Dorsolateral prefrontal cortex (tissue), 120 donors: ENCODE measurements at regions of chr4 and their contacts with region 1.

Region 1: DNA sequence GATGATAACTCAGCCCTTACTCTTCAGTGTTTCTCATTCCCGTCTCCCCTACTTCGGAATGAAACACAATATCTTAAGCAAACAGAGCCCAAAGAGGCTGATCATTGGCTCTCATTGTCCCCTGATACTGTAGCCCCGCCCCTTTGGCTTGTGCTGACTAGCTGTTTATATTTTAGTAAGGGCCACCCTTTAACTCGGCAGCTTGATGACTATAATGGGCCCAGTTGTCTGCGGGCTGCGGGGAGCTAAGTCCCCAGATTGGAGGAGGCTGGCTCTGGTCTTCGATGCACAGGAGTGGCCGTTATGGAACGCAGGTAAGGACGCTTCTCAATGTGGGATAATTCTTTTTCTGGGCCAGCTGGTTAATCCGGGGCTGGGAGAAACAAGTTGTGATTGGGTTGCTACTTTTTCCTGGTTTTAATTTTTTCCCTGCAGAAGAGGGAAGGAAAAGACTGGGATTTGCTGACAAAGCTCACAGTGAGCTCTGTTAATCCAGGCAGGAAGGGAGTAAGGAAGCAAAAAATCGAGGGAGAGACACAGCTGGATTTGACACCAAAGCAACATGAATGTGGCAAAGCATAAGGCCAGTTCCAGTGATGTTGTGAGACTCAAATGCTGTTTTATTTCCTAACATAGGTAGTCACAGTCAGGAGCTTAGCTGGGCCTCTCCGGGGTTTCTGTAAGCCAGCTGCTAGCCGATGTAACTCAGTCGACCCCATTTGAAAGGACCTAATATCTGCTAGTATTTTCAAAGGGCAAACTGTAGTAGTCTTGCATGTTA is at the start of gene TRIM2:
- DNase-seq: peak; percentile 24 to 92 (median 82)
- H3K4me3 ChIP-seq: peak within 1 kb of the TSS; percentile 29 to 84 (median 62)
- H3K27ac ChIP-seq: peak within 1 kb of the TSS in 58 of 59 donors; percentile 49 to 97 (median 88)
- H3K27me3 ChIP-seq: no peaks in the 10 kb centered on the region
- CTCF ChIP-seq: peak in 6 of 56 donors; percentile 8 to 24 (median 18)
- total RNA-seq, gene TRIM2: 287 to 703 (median 456) TPM

Region 2: DNA sequence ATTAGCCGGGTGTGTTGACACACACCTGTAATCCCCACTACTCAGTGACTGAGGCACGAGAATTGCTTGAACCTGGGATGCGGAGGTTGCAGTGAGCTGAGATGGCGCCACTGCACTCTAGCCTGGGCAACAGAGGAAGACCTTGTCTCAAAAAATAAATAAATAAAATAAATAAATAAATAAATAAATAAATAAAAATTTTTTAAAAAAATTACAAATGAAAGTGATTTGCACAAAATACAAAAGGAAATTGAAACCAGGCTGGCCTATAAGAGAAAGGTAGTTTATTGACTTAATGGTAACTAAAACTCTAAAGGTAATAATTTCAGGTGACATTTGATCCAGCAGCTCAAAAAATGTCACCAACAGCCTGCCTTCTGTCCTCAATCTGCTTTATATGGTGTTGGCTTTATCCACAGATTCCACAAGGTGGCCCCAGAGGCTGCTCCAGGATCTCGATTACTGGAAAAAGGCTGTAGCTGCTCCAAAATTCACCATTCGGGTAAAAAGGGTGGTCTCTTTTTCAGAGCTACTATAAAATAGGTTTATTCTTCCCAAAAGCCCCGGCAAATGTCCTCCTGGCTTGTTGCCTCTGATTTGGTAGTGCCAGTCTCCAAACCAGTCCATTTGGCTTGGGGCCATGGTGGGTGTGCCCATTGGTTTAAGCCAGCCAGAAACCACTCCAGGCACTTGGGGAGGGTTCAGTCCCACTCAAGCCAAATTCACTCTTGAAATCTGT is 61.6 kb before region 1 on chr4:
- intact Hi-C with region 1: loop called in 1 of 2 experiments (anchors 2 kb)
- DNase-seq: peak; percentile 52 to 87 (median 72)
- H3K4me3 ChIP-seq: peak overlapping the region in 17 of 59 donors; percentile 1 to 32 (median 11)
- H3K27ac ChIP-seq: peak overlapping the region in 55 of 59 donors; percentile 2 to 100 (median 74)
- H3K27me3 ChIP-seq: no peaks in the 10 kb centered on the region
- CTCF ChIP-seq: peak; percentile 65 to 96 (median 89)

Region 3: DNA sequence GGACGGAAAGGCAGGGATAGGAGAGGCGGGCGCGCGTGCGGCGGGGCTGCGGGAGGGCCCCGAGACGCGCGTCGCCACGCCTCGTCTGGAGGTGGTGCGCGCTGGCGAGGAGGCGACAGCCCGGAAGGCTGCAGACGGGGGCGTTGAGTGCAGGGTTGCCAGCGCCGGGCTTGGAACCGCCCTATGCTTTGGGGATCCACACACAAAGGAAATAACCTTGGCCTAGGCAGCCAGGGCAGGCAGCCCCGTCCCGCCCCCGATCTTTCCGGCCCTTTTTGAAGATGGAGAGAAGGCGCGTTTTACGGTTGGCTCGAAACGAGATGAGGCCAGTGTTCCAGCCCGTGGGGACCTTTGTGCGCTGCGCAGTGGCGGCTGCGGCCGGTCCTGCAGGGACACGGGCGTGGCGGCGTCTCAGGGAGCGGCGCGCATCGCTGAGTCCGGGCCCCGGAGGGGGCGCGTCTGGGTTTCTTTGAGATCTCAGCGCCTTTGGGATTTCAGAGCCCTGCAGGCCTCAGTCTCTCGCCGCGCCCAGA is 51.0 kb before region 1 on chr4:
- intact Hi-C with region 1: loop called in 1 of 2 experiments (anchors 5 kb)
- DNase-seq: peak in 9 of 10 donors; percentile 48 to 80 (median 61)
- H3K4me3 ChIP-seq: peak overlapping the region; percentile 52 to 85 (median 71)
- H3K27ac ChIP-seq: peak overlapping the region; percentile 71 to 95 (median 88)
- H3K27me3 ChIP-seq: no peaks in the 10 kb centered on the region
- CTCF ChIP-seq: peak in 27 of 56 donors; percentile 9 to 55 (median 17)

Region 4: GRCh38 chr4:153169776-153170175 is 34.7 kb before region 1 on chr4:
- intact Hi-C with region 1: loop called (anchors 1 to 5 kb)
- DNase-seq: peak; percentile 7 to 94 (median 78)
- H3K4me3 ChIP-seq: peak overlapping the region in 26 of 59 donors; percentile 2 to 53 (median 23)
- H3K27ac ChIP-seq: peak overlapping the region; percentile 24 to 99 (median 93)
- H3K27me3 ChIP-seq: no peaks in the 10 kb centered on the region
- CTCF ChIP-seq: peak in 3 of 56 donors; percentile 2 to 17 (median 4)

Region 5: DNA sequence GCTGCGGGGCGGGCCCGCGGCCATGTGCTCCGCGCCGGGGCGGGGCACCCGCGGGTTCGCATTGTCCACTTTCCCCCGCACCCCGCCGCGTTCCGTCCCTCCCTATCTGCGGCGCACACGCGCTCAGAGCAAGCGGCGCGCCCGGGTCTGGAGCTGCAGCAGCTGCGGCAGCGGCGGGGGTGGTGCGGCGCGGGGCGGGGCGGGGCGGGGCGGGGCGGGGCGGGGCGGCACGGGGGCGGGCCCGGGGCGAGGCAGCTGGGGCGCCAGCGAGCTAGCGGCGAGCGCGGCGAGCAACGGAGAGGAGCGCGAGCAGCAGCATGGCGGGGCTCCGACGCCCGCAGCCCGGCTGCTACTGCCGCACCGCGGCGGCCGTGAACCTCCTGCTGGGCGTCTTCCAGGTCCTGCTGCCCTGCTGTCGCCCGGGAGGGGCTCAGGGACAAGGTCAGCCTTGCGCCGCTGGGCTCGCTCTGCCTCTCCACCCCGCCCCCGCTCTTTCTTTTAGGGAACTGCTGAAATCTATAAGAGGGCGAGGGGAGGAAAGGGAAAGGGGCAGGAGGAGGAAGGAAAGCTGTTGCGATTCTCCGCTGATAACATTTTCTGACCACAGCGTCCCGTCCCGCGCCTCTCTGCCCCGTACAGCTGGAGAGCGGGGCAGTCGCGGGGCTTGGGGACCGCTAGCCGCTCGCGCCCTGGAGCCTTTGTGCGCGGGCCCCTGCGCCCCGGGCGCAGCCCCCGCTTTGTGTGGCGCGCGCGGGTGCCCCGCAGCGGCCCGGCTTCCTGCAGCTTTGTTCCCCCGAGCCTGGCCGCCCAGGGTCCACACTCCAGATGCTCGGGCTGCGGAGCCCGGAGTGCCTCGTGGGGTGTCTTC is 261.9 kb after region 1 on chr4 and contains the start of gene TMEM131L:
- intact Hi-C with region 1: loop called in 1 of 2 experiments (anchors 10 kb)
- DNase-seq: peak; percentile 13 to 84 (median 66)
- H3K4me3 ChIP-seq: peak within 1 kb of the TSS; percentile 57 to 90 (median 82)
- H3K27ac ChIP-seq: peak within 1 kb of the TSS in 58 of 59 donors; percentile 7 to 85 (median 72)
- H3K27me3 ChIP-seq: no peaks in the 10 kb centered on the region
- CTCF ChIP-seq: peak in 32 of 56 donors; percentile 3 to 43 (median 26)
- total RNA-seq, gene TMEM131L: 3.8 to 16.5 (median 8.7) TPM